B cell (primary cell): ENCODE measurements at regions of chr22 and their contacts with region 1.

Region 1: GRCh38 chr22:38973289-38974169 is 8.6 kb upstream of the APOBEC3B start:
- DNase-seq: peak; percentile 71
- ATAC-seq: peak; percentile 89
- H3K4me3 ChIP-seq: no peak overlapping the region
- H3K4me3 Mint-ChIP-seq: no peak overlapping the region
- H3K27ac ChIP-seq: no peak overlapping the region
- H3K27ac Mint-ChIP-seq: no peak overlapping the region
- H3K4me1 ChIP-seq: peaks cover 0 to 8% of the 10 kb centered on the region in 2 donors
- H3K4me1 Mint-ChIP-seq: peaks cover 6% of the 10 kb centered on the region
- H3K27me3 ChIP-seq: peaks cover 0 to 20% (median 0%) of the 10 kb centered on the region in 4 experiments
- H3K27me3 Mint-ChIP-seq: peaks cover 24% of the 10 kb centered on the region
- CTCF ChIP-seq: peak; percentile 92

Region 2: GRCh38 chr22:38826801-38827200 is 146.7 kb before region 1 on chr22:
- CTCF ChIA-PET with region 1: no interaction called
- POLR2A ChIA-PET with region 1: interaction called, 10 read pairs
- intact Hi-C with region 1: no loop called
- DNase-seq: no peak
- ATAC-seq: no peak
- H3K4me3 ChIP-seq: no peak overlapping the region
- H3K4me3 Mint-ChIP-seq: no peak overlapping the region
- H3K27ac ChIP-seq: no peak overlapping the region
- H3K27ac Mint-ChIP-seq: no peak overlapping the region
- H3K4me1 ChIP-seq: no peaks in the 10 kb centered on the region
- H3K4me1 Mint-ChIP-seq: no peaks in the 10 kb centered on the region
- H3K27me3 ChIP-seq: no peaks in the 10 kb centered on the region
- H3K27me3 Mint-ChIP-seq: peaks cover 15% of the 10 kb centered on the region
- CTCF ChIP-seq: no peak

Region 3: GRCh38 chr22:39122786-39123475 is 149.4 kb after region 1 on chr22:
- CTCF ChIA-PET with region 1: interaction called, 4 read pairs
- POLR2A ChIA-PET with region 1: no interaction called
- intact Hi-C with region 1: loop called (anchors 1 kb)
- DNase-seq: no peak
- ATAC-seq: no peak
- H3K4me3 ChIP-seq: no peak overlapping the region
- H3K4me3 Mint-ChIP-seq: no peak overlapping the region
- H3K27ac ChIP-seq: no peak overlapping the region
- H3K27ac Mint-ChIP-seq: no peak overlapping the region
- H3K4me1 ChIP-seq: peaks cover 5 to 12% of the 10 kb centered on the region in 2 donors
- H3K4me1 Mint-ChIP-seq: peaks cover 16% of the 10 kb centered on the region
- H3K27me3 ChIP-seq: no peaks in the 10 kb centered on the region
- H3K27me3 Mint-ChIP-seq: no peaks in the 10 kb centered on the region
- CTCF ChIP-seq: no peak